CD8-positive, alpha-beta T cell (primary cell): ENCODE measurements at regions of chr17 and their contacts with region 1.

Region 1: DNA sequence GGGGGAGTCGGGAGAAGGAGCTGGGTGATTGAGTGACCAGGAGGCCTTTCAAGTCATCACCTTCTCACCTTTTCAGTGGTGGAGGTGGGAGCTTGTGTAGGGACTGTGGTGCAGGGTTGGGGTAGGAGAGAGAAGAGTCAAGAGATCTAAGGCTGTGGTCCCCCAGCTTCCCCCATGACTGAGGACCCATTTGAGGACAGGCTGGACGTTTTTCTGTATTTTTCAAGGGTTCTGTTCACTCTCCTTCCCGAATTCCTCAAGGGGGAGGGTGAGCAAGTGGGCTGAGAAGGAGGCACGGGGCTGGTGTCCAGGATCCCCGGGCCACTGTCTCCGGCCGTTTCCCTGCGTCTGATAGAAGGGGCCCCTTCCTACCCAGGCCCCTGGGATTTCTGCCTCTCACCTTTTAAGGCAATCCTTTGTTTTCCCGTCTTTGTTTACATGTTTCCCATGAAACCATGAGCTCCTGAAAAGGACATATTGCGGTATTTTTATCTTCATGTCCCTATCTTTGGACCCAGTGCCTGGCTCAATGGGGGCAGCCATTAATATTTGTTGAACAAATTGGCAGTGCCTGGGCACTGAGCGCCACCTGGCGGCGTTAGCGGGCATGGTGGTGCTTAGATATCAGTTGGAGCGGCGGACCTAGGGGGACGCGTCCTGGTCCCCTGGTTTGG is 9.2 kb upstream of the CD300A start:
- DNase-seq: peak; percentile 54 to 83 (median 71)
- ATAC-seq: peak; percentile 62
- H3K4me3 ChIP-seq: no peak overlapping the region
- H3K4me3 Mint-ChIP-seq: no peak overlapping the region
- H3K27ac ChIP-seq: no peak overlapping the region
- H3K27ac Mint-ChIP-seq: no peak overlapping the region
- H3K4me1 ChIP-seq: peaks cover 38% of the 10 kb centered on the region
- H3K4me1 Mint-ChIP-seq: peaks cover 32% of the 10 kb centered on the region
- H3K27me3 ChIP-seq: no peaks in the 10 kb centered on the region
- H3K27me3 Mint-ChIP-seq: peaks cover 3% of the 10 kb centered on the region
- CTCF ChIP-seq: peak; percentile 91

Region 2: DNA sequence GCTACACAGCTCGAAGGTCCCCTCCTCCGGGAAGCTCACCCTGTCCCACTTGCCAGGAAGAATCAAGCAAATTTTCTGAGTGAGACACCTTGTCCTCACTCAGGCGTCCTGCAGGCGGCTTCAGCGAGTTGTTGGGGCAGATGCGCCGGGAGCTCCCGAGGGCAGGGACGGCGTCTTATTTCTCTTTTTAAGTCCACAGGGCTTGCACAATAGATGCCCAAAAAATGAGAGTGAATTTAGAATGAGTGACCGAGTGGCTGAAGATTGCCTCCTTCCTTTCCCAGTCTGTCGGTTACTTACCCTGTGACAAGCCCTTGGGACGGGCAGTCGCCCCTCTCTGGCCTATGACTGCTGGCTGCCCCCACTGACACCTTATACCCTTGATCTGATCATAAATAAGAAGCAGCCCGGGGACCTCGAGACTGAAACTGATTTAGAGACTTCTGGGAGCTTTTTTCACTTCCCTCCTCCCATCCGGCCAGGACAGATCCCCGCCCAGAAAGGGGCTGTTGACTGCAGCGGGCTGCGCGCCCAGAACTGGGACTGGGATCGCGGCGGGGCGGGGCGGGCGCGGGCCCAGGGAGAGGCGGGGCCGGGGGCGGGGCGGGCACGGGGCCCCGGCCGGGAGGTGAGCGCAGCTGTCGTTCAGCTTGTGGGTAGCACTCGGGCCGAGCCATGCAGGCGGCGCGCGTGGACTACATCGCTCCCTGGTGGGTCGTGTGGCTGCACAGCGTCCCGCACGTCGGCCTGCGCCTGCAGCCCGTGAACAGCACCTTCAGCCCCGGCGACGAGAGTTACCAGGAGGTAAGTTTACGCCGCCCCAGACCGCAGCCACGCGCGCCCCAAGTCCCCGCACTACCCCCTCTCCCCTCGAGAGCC is 244.1 kb before region 1 on chr17 and contains the start of gene TTYH2:
- CTCF ChIA-PET with region 1: interaction called, 6 read pairs
- POLR2A ChIA-PET with region 1: no interaction called
- intact Hi-C with region 1: loop called in 1 of 2 experiments (anchors 1 kb)
- DNase-seq: peak; percentile 34 to 86 (median 70)
- ATAC-seq: peak; percentile 69
- H3K4me3 ChIP-seq: peak within 1 kb of the TSS; percentile 48 to 50
- H3K4me3 Mint-ChIP-seq: peak within 1 kb of the TSS; percentile 88
- H3K27ac ChIP-seq: peak within 1 kb of the TSS; percentile 28 to 55
- H3K27ac Mint-ChIP-seq: peak within 1 kb of the TSS; percentile 89
- H3K4me1 ChIP-seq: peaks cover 37% of the 10 kb centered on the region
- H3K4me1 Mint-ChIP-seq: peaks cover 43% of the 10 kb centered on the region
- H3K27me3 ChIP-seq: no peaks in the 10 kb centered on the region
- H3K27me3 Mint-ChIP-seq: no peaks in the 10 kb centered on the region
- CTCF ChIP-seq: no peak
- total RNA-seq, gene TTYH2: 4.6 to 5.6 TPM

Region 3: DNA sequence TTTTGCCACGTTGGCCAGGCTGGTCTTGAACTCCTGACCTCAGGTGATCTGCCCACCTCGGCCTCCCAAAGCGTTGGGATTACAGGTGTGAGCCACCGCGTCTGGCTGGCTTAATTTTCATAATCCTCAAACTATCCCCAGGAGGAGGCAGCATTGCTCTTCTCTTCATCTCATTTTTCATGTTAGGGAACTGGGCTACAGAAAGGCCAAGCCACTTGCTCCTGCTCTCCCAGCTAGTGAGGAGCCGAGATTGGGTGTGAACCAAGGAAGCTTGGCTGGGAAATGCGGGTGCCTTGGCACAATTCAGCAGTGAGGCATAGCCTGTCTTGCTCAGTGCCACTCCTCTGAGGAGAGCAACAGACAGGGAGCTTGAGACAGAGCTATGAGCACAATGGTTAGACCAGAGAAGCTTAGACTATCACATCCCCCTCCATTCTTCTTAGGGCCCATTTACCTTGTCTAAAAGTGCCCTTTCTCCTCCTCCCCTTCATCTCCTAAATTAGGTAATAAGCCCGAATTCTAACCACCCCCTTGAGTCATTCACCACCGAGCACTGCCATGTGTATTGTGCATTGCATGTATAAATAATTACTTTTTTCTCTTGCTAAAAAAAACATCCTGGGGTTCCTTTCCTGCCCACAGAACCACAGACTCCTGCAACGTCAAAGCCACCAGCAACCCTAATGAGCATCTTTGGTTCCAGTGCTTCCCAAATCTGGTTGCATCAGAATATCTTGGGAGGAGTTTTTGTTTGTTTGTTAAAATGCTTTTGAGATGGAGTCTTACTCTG is 151.2 kb before region 1 on chr17:
- CTCF ChIA-PET with region 1: no interaction called
- POLR2A ChIA-PET with region 1: no interaction called
- intact Hi-C with region 1: loop called (anchors 1 to 10 kb)
- DNase-seq: no peak
- ATAC-seq: no peak
- H3K4me3 ChIP-seq: no peak overlapping the region
- H3K4me3 Mint-ChIP-seq: no peak overlapping the region
- H3K27ac ChIP-seq: no peak overlapping the region
- H3K27ac Mint-ChIP-seq: no peak overlapping the region
- H3K4me1 ChIP-seq: no peaks in the 10 kb centered on the region
- H3K4me1 Mint-ChIP-seq: peaks cover 7% of the 10 kb centered on the region
- H3K27me3 ChIP-seq: no peaks in the 10 kb centered on the region
- H3K27me3 Mint-ChIP-seq: peaks cover 2% of the 10 kb centered on the region
- CTCF ChIP-seq: no peak

Region 4: DNA sequence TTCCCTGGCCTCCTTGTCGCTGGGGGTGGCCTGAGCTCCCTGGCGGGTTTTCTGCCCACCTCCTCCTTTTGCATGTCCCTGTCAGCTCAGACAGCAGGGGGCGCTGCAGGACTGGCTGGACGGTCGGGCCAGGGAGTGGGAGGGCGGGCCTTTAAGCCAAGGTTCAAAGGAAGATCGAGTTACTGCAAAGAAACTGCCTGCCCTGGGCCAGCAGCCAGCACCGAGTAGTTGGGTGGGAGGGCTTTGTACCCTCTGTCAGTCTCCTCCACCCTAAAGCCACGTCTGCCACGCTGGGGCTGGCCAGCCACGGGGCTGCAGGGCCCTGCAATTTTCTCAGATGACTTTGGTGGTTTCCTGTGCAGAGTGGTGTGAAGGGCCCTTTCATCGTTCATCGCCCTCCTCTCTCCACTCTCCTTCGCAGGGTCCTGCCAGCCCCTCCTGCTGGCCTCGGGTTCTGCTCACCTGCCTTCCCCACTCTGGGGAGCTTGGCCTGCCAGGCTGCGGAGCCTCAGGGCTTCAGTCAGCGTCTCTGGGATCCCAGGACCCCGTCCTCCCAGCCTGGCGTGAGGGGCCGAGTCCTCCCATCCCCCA is 77.7 kb before region 1 on chr17:
- CTCF ChIA-PET with region 1: interaction called, 86 read pairs
- POLR2A ChIA-PET with region 1: interaction called, 3 read pairs
- intact Hi-C with region 1: loop called (anchors 1 kb)
- DNase-seq: peak; percentile 88 to 97 (median 90)
- ATAC-seq: peak; percentile 93
- H3K4me3 ChIP-seq: peak overlapping the region in 1 of 2 experiments; percentile 32
- H3K4me3 Mint-ChIP-seq: no peak overlapping the region
- H3K27ac ChIP-seq: peak overlapping the region in 1 of 2 experiments; percentile 37
- H3K27ac Mint-ChIP-seq: no peak overlapping the region
- H3K4me1 ChIP-seq: peaks cover 10% of the 10 kb centered on the region
- H3K4me1 Mint-ChIP-seq: peaks cover 6% of the 10 kb centered on the region
- H3K27me3 ChIP-seq: no peaks in the 10 kb centered on the region
- H3K27me3 Mint-ChIP-seq: peaks cover 3% of the 10 kb centered on the region
- CTCF ChIP-seq: peak; percentile 81

Region 5: DNA sequence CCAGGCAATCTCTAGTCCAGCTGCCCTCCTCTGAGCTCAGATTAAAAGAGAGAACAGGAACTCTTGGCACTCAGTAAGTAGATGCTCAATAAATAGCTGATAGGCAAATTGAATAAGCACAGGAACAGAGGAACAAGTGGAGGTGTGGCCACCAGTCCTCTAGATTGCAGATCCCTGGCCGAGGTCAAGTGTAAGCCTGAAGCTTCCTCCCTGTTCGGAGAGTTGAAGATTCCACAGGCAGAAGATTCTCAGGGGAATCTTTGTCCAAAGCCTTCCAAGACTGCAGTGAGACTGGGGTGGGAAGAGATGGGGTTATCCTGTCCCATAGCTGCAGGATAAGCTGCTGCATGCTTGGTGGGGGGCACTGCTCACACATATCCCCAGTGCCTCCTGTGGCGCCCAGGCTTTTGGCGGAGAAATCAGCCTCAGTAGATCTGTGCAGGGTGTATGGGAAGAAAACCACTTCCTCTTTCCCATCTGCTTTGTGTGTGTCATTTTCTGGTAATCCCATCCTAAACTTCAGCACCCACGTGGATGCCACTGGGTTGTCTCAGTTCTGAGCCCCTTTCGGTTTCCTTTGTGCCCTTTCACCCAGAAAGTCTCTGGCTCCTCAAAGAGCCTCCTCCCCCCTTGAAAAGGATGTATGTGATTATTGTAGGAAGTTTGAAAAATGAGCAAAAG is 21.3 kb after region 1 on chr17:
- CTCF ChIA-PET with region 1: interaction called, 43 read pairs
- POLR2A ChIA-PET with region 1: interaction called, 4 read pairs
- intact Hi-C with region 1: loop called in 1 of 2 experiments (anchors 1 kb)
- DNase-seq: peak in 4 of 9 experiments; percentile 46 to 81 (median 52)
- ATAC-seq: peak; percentile 68
- H3K4me3 ChIP-seq: no peak overlapping the region
- H3K4me3 Mint-ChIP-seq: peak overlapping the region; percentile 47
- H3K27ac ChIP-seq: peak overlapping the region in 1 of 2 experiments; percentile 74
- H3K27ac Mint-ChIP-seq: peak overlapping the region; percentile 76
- H3K4me1 ChIP-seq: peaks cover 51% of the 10 kb centered on the region
- H3K4me1 Mint-ChIP-seq: peaks cover 55% of the 10 kb centered on the region
- H3K27me3 ChIP-seq: no peaks in the 10 kb centered on the region
- H3K27me3 Mint-ChIP-seq: no peaks in the 10 kb centered on the region
- CTCF ChIP-seq: no peak

Region 6: GRCh38 chr17:74493381-74493833 is 36.1 kb after region 1 on chr17:
- CTCF ChIA-PET with region 1: interaction called, 136 read pairs
- POLR2A ChIA-PET with region 1: no interaction called
- intact Hi-C with region 1: loop called (anchors 1 kb)
- DNase-seq: peak; percentile 51 to 82 (median 73)
- ATAC-seq: peak; percentile 83
- H3K4me3 ChIP-seq: no peak overlapping the region
- H3K4me3 Mint-ChIP-seq: no peak overlapping the region
- H3K27ac ChIP-seq: no peak overlapping the region
- H3K27ac Mint-ChIP-seq: no peak overlapping the region
- H3K4me1 ChIP-seq: no peaks in the 10 kb centered on the region
- H3K4me1 Mint-ChIP-seq: peaks cover 3% of the 10 kb centered on the region
- H3K27me3 ChIP-seq: no peaks in the 10 kb centered on the region
- H3K27me3 Mint-ChIP-seq: no peaks in the 10 kb centered on the region
- CTCF ChIP-seq: peak; percentile 93

Region 7: DNA sequence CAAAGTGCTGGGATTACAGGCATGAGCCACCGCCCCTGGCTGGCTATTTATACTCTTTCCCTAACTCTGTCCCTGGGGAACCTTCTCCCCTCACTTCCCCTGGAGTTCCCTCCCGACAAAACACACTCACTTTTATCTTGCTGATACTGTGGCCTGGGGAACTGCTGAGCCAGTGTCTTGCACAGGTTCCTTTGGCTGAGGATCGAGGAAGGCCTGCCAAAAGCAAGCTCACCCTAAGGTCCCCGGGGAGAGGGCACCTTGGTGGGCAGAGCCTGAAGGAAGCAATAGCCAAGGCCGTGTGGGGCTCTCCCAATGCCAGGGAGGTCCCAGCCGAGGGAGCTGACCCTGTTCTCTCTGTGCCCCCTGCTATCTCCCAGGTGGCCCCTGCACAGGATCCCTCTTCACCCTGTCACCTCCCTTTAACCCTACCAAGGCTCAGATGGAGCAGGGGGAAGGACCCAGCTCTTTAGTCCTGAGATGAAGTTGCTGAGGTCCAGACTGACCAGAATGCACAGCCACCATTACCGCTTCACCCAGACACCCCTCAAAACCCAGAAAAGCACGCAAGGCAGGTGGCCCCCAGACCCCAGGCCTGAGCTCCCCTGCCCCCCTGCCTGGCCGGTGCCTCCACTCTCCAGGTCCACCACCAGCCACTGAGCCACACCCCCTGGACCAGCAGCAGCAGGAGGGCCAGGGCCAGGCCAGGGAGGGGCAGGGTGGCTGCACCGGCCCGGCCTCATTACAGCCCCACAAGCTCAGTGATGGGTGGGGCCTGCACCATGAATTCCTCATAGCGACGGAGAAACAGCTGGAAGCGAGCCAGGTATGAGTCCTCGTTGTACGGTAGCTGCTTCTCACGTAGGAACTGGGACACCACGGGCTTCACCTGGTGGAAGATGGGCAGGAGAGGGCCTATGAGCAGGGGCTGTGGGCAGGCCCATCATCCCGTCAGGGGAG is 420.6 kb after region 1 on chr17:
- CTCF ChIA-PET with region 1: no interaction called
- POLR2A ChIA-PET with region 1: no interaction called
- intact Hi-C with region 1: no loop called
- DNase-seq: no peak
- ATAC-seq: no peak
- H3K4me3 ChIP-seq: no peak overlapping the region
- H3K4me3 Mint-ChIP-seq: no peak overlapping the region
- H3K27ac ChIP-seq: no peak overlapping the region
- H3K27ac Mint-ChIP-seq: no peak overlapping the region
- H3K4me1 ChIP-seq: peaks cover 6% of the 10 kb centered on the region
- H3K4me1 Mint-ChIP-seq: peaks cover 10% of the 10 kb centered on the region
- H3K27me3 ChIP-seq: no peaks in the 10 kb centered on the region
- H3K27me3 Mint-ChIP-seq: peaks cover 4% of the 10 kb centered on the region
- CTCF ChIP-seq: no peak

Region 8: GRCh38 chr17:76240461-76241203 is 1783.3 kb after region 1 on chr17 and contains the start of gene RNF157:
- CTCF ChIA-PET with region 1: no interaction called
- POLR2A ChIA-PET with region 1: no interaction called
- intact Hi-C with region 1: no loop called
- DNase-seq: peak in 8 of 9 experiments; percentile 48 to 87 (median 64)
- ATAC-seq: peak; percentile 88
- H3K4me3 ChIP-seq: peak within 1 kb of the TSS; percentile 61 to 77
- H3K4me3 Mint-ChIP-seq: peak within 1 kb of the TSS; percentile 87
- H3K27ac ChIP-seq: peak within 1 kb of the TSS; percentile 49 to 63
- H3K27ac Mint-ChIP-seq: peak within 1 kb of the TSS; percentile 91
- H3K4me1 ChIP-seq: peaks cover 52% of the 10 kb centered on the region
- H3K4me1 Mint-ChIP-seq: peaks cover 54% of the 10 kb centered on the region
- H3K27me3 ChIP-seq: no peaks in the 10 kb centered on the region
- H3K27me3 Mint-ChIP-seq: no peaks in the 10 kb centered on the region
- CTCF ChIP-seq: no peak
- total RNA-seq, gene RNF157: 22.3 to 25.5 TPM